Endothelial cell of umbilical vein (primary cell): ENCODE measurements at regions of chr7 and their contacts with region 1.

Region 1: DNA sequence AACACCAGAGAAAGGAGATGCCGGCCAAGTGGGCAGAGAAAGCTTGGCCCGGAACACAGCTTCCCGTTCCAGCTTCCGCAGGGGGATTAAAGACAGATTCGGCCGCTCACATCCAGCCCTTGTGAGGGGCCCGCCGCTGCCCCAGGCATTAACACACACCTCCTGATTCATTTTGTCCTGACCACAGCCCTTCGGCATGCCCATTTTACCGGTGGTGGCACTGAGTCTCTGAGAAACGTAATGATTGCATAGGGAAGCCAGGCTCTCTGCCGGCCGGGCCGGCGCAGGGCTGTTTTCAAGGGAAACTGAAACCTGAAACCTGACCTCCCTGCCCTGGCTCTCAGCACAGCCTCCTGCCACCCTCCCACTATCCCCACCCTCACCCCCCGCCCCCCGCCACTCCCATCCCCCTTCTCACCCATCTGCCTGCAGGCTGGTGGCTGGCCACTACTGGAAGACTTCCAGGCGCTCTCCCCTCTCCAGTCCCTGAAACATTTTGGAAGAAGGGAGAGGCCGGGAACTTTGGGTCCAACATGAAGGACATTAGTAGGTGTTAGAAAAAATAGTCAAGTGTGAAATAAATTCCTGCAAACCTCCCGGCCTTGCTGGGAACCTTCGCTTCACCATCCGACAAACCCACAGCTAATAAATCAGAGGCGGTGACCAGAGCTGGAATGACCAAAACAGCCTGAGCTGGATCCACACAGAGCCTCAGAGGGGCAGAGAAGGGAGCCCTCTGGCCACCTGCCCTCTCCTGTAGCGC is 83.5 kb upstream of the CUX1 start:
- DNase-seq: peak; percentile 18
- H3K4me3 ChIP-seq: peak overlapping the region; percentile 7 to 50 (median 33)
- H3K27ac ChIP-seq: no peak overlapping the region
- H3K4me1 ChIP-seq: peaks cover 4% of the 10 kb centered on the region
- H3K27me3 ChIP-seq: no peaks in the 10 kb centered on the region
- CTCF ChIP-seq: no peak
- POLR2A ChIP-seq: no peak

Region 2: GRCh38 chr7:101165075-101165957 is 568.6 kb before region 1 on chr7 and contains the start of gene VGF:
- CTCF ChIA-PET with region 1: no interaction called
- POLR2A ChIA-PET with region 1: no interaction called
- dilution Hi-C with region 1: no loop called
- intact Hi-C with region 1: loop called (anchors 10 kb)
- DNase-seq: peak; percentile 86
- H3K4me3 ChIP-seq: no peak within 1 kb of the TSS
- H3K27ac ChIP-seq: no peak within 1 kb of the TSS
- H3K4me1 ChIP-seq: peaks cover 16% of the 10 kb centered on the region
- H3K27me3 ChIP-seq: peaks cover 52 to 58% of the 10 kb centered on the region in 2 experiments
- CTCF ChIP-seq: no peak
- POLR2A ChIP-seq: no peak
- total RNA-seq, gene VGF: not detected in 2 replicates

Region 3: DNA sequence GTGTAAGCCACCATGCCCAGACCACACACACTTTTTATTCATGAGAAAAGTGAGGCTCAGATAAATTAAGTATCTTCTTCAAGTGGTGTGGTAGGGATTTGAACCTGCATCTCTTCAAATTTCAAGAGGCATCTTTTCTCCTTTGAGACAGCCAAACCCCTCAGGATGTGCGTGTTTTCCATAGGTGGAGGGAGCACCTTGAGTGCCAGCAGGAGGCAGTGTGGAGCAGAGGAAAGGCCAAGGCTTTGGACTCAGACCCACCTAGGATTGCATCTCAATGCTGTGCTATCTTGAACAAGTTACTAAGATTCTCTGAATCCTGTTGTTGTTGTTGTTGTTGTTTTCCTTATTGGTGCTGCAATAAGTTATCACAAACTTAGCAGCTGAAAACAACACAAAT is 64.6 kb before region 1 on chr7:
- CTCF ChIA-PET with region 1: no interaction called
- POLR2A ChIA-PET with region 1: no interaction called
- dilution Hi-C with region 1: no loop called
- intact Hi-C with region 1: no loop called
- DNase-seq: no peak
- H3K4me3 ChIP-seq: no peak overlapping the region
- H3K27ac ChIP-seq: no peak overlapping the region
- H3K4me1 ChIP-seq: no peaks in the 10 kb centered on the region
- H3K27me3 ChIP-seq: no peaks in the 10 kb centered on the region
- CTCF ChIP-seq: peak; percentile 14 to 16
- POLR2A ChIP-seq: no peak

Region 4: DNA sequence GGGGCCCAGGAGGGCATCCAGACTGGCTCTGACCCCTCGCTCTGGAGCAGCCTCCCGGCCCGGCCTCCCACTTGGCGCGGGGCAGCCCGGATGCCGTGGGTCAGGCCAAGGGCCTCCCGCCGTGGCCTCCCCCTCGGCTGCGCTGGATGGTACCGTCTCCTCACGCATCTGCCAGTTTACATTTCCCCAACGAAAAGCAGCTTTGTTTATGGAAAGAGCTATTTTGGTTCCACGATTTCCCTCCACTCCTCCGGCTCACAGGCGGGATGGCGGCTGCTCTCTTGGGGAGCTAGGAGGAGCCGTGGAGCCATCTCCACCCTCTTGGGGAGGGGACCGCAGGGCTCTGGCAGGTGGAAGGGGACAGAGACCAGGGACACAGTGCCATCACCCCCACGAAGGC is 11.6 kb before region 1 on chr7:
- CTCF ChIA-PET with region 1: no interaction called
- POLR2A ChIA-PET with region 1: no interaction called
- dilution Hi-C with region 1: no loop called
- intact Hi-C with region 1: no loop called
- DNase-seq: no peak
- H3K4me3 ChIP-seq: no peak overlapping the region
- H3K27ac ChIP-seq: no peak overlapping the region
- H3K4me1 ChIP-seq: no peaks in the 10 kb centered on the region
- H3K27me3 ChIP-seq: no peaks in the 10 kb centered on the region
- CTCF ChIP-seq: no peak
- POLR2A ChIP-seq: no peak